Natural killer cell (primary cell): ENCODE measurements at regions of chr6 and their contacts with region 1.

Region 1: DNA sequence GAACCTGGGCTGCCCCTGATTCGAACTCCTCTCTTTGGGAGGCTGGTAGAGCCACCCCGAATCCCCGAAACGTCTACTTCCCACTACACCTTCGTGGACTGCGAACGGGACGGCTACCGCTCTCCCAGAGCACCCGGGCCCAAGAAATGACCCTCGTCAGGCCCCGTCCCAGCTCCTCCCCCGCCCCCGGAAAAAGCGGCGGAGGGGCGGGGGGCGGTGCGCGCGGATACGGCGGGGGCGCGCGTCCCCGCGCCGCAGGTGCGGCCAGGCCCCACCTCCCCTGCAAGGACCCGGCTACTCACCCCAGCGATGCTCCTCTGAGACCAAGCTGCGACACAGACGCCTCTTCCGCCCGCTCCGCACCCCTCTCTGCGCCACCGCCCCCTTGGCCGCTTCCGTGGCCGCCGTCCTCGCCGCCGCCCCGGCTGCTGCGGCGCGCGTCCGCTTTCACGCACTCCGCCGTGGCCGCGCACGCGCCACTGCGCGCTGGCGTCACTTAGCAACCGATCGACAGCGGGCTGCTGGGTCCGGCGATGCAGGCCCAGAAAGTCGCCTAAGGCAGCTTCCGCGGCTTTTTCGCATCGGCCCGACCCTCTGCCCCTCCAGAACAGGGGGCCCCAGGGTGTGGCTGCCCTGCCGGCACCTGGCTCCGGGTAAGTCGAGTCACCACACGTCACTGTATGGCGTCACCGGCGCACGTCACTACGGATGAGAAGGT is at the start of gene BTBD9:
- DNase-seq: peak; percentile 85 to 95
- ATAC-seq: peak; percentile 78 to 89 (median 85)
- H3K4me3 ChIP-seq: peak within 1 kb of the TSS; percentile 74
- H3K4me3 Mint-ChIP-seq: peak within 1 kb of the TSS; percentile 87
- H3K27ac ChIP-seq: peak within 1 kb of the TSS; percentile 98
- H3K27ac Mint-ChIP-seq: peak within 1 kb of the TSS; percentile 87 to 91
- H3K4me1 ChIP-seq: peaks cover 18% of the 10 kb centered on the region
- H3K4me1 Mint-ChIP-seq: peaks cover 43 to 49% of the 10 kb centered on the region in 2 donors
- H3K27me3 ChIP-seq: no peaks in the 10 kb centered on the region
- H3K27me3 Mint-ChIP-seq: no peaks in the 10 kb centered on the region
- CTCF ChIP-seq: no peak
- total RNA-seq, gene BTBD9: 51.6 to 70.3 (median 54.3) TPM

Region 2: DNA sequence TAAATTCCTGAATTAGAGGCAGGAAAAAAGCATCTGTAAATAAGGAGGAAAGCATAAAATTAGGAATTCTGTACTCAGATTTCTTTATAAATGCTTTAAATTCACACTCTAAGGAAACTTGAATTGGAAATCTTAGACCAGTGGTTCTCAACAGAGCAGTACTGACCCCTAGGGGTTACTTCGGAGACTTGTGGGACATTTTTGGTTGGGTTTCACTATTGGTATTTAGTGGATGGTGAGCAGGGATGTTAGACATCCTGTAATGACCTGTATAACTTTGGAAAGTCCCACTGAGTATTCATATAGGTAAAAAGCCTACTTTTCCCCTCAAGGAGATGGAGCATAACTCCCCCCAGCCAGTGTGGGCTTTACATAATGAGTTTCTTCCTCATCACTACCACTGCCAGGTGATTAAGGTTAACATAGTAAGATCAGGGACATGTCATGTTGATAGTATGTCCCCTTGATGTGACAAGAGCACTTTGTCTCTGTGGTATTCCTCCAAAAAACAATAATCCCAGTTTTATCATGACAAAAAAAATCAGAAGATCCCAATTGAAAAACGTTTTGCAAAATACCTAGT is 32.3 kb after region 1 on chr6:
- intact Hi-C with region 1: loop called (anchors 1 kb)
- DNase-seq: peak in 1 of 2 donors; percentile 74
- ATAC-seq: peak; percentile 81 to 93 (median 92)
- H3K4me3 ChIP-seq: no peak overlapping the region
- H3K4me3 Mint-ChIP-seq: no peak overlapping the region
- H3K27ac ChIP-seq: no peak overlapping the region
- H3K27ac Mint-ChIP-seq: no peak overlapping the region
- H3K4me1 ChIP-seq: no peaks in the 10 kb centered on the region
- H3K4me1 Mint-ChIP-seq: peaks cover 6 to 16% of the 10 kb centered on the region in 2 donors
- H3K27me3 ChIP-seq: no peaks in the 10 kb centered on the region
- H3K27me3 Mint-ChIP-seq: no peaks in the 10 kb centered on the region
- CTCF ChIP-seq: peak; percentile 78

Region 3: GRCh38 chr6:39114704-39115599 is 475.3 kb after region 1 on chr6 and contains the start of gene SAYSD1:
- intact Hi-C with region 1: loop called (anchors 10 kb)
- DNase-seq: peak; percentile 92 to 98
- ATAC-seq: peak; percentile 87 to 94 (median 90)
- H3K4me3 ChIP-seq: peak within 1 kb of the TSS; percentile 92
- H3K4me3 Mint-ChIP-seq: peak within 1 kb of the TSS; percentile 96
- H3K27ac ChIP-seq: peak within 1 kb of the TSS; percentile 96
- H3K27ac Mint-ChIP-seq: peak within 1 kb of the TSS; percentile 91 to 98
- H3K4me1 ChIP-seq: peaks cover 6% of the 10 kb centered on the region
- H3K4me1 Mint-ChIP-seq: peaks cover 21 to 29% of the 10 kb centered on the region in 2 donors
- H3K27me3 ChIP-seq: no peaks in the 10 kb centered on the region
- H3K27me3 Mint-ChIP-seq: no peaks in the 10 kb centered on the region
- CTCF ChIP-seq: no peak
- total RNA-seq, gene SAYSD1: 11.3 to 13.1 (median 11.5) TPM

Region 4: DNA sequence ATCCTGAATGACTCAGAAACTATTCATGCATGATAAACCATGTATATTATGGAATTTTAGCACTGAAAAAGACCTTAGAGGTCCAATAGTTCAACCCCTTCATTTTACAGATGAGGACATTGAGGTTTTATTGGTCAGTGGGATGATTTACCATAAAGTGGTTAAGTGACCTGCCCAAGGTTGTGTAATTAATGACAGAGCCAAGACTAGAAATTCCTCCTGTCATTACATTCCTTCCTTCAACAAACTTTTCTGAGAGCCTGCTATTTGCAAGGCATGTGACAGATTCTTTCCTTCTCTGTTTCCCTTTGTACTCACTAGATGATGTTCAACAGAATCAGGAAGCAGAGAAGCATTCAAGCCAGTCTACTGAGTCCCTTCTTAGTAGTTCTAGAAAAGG is 853.5 kb after region 1 on chr6:
- intact Hi-C with region 1: no loop called
- DNase-seq: no peak
- ATAC-seq: no peak
- H3K4me3 ChIP-seq: no peak overlapping the region
- H3K4me3 Mint-ChIP-seq: no peak overlapping the region
- H3K27ac ChIP-seq: no peak overlapping the region
- H3K27ac Mint-ChIP-seq: no peak overlapping the region
- H3K4me1 ChIP-seq: no peaks in the 10 kb centered on the region
- H3K4me1 Mint-ChIP-seq: peaks cover 0 to 4% of the 10 kb centered on the region in 2 donors
- H3K27me3 ChIP-seq: no peaks in the 10 kb centered on the region
- H3K27me3 Mint-ChIP-seq: peaks cover 26 to 53% of the 10 kb centered on the region in 2 donors
- CTCF ChIP-seq: no peak